HCT116 (cell line): ENCODE measurements at regions of chr5 and their contacts with region 1.

Region 1: DNA sequence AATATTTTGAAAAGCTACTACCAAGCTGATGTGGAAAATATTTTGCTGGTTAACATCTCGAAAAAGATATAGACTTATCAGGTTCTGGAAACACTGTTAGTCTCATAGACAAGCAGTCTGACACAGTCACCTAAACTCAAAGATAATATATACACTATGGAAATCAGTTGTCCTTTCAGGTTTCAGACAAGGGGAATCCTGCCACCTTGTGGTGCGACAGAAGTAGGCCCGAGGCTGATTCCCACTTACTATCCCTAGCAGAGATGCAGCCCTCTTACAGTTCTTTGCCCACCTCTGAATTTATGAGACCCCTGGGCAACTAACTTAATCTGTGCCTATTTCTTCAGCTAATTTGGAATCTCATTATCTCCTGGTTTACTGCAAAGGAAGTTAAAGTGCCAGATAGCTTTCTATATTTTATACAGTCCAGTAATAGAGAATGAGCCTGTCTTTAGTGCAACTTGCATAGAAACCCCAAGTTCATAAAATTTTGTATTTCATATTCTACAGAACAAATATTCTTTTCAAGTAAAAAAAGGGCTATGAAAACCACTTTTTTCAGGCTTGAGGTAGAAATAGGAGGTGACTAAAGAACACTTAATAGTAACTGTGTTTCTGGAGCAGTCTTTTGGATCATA is 16.9 kb downstream of the RAD1 start:
- DNase-seq: peak; percentile 44
- ATAC-seq: peak; percentile 87
- H3K4me3 ChIP-seq: no peak overlapping the region
- H3K27ac ChIP-seq: no peak overlapping the region
- H3K4me1 ChIP-seq: no peaks in the 10 kb centered on the region
- H3K27me3 ChIP-seq: no peaks in the 10 kb centered on the region
- CTCF ChIP-seq: peak; percentile 76 to 90 (median 88); a peak in 5 of 6 replicates
- POLR2A ChIP-seq: no peak
- RAD21 ChIP-seq: peak; percentile 89

Region 2: GRCh38 chr5:34486160-34486848 is 412.1 kb before region 1 on chr5:
- CTCF ChIA-PET with region 1: interaction called, 16 read pairs
- POLR2A ChIA-PET with region 1: no interaction called
- RAD21 ChIA-PET with region 1: interaction called, 4 to 5 read pairs
- intact Hi-C with region 1: loop called (anchors 1 kb)
- DNase-seq: peak; percentile 69
- ATAC-seq: peak; percentile 88
- H3K4me3 ChIP-seq: no peak overlapping the region
- H3K27ac ChIP-seq: no peak overlapping the region
- H3K4me1 ChIP-seq: no peaks in the 10 kb centered on the region
- H3K27me3 ChIP-seq: 0 out of 2 replicates have a peak, but pooled peaks cover 6% of the 10 kb centered on the region
- CTCF ChIP-seq: peak; percentile 75 to 86 (median 78); a peak in 5 of 6 replicates
- POLR2A ChIP-seq: no peak
- RAD21 ChIP-seq: peak; percentile 89

Region 3: DNA sequence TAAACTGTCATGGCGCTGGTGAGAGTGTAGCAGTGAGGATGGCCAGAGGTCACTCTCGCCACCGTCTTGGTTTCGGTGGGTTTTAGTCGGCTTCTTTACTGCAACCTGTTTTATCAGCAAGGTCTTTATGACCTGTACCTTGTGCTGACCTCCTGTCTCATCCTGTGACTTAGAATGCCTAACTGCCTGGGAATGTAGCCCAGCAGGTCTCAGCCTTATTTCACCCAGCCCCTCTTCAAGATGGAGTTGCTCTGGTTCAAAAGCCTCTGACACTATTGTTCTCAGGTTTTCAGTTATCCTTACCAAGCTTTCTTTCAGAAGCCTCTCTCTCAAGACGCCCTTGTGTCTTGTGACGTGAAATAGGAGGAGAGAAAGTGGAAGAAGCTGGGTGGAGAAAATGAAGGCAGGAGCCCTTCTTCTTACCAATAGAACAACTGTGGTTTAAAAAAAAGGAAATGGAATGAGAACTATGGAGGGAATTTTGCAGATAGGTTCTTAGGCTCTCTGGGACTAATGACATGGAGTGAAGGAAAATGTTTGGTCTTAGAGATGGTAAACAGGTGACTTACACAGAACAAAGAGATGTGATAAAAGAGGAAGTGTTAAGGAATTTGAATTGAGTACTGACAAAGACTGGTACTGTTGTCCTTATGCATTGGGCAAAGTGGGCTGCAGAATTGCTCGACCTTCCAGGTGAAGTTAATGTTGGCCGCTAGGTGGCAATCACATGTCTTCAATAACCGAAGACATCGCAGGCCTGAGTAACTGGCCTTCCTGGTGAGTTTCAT is 375.6 kb before region 1 on chr5:
- CTCF ChIA-PET with region 1: interaction called, 8 read pairs
- POLR2A ChIA-PET with region 1: interaction called, 4 read pairs
- RAD21 ChIA-PET with region 1: no interaction called
- intact Hi-C with region 1: loop called (anchors 1 kb)
- DNase-seq: peak; percentile 71
- ATAC-seq: peak; percentile 97
- H3K4me3 ChIP-seq: no peak overlapping the region
- H3K27ac ChIP-seq: no peak overlapping the region
- H3K4me1 ChIP-seq: no peaks in the 10 kb centered on the region
- H3K27me3 ChIP-seq: no peaks in the 10 kb centered on the region
- CTCF ChIP-seq: peak; percentile 65 to 80 (median 68); a peak in 5 of 6 replicates
- POLR2A ChIP-seq: no peak
- RAD21 ChIP-seq: peak; percentile 87

Region 4: GRCh38 chr5:34656001-34656699 is 242.2 kb before region 1 on chr5 and contains the start of gene RAI14:
- CTCF ChIA-PET with region 1: no interaction called
- POLR2A ChIA-PET with region 1: no interaction called
- RAD21 ChIA-PET with region 1: no interaction called
- intact Hi-C with region 1: loop called (anchors 10 kb)
- DNase-seq: peak; percentile 23
- ATAC-seq: peak; percentile 90
- H3K4me3 ChIP-seq: peak within 1 kb of the TSS; percentile 74 to 89
- H3K27ac ChIP-seq: peak within 1 kb of the TSS; percentile 78
- H3K4me1 ChIP-seq: peaks cover 13 to 24% of the 10 kb centered on the region in 2 experiments
- H3K27me3 ChIP-seq: no peaks in the 10 kb centered on the region; the same call in 1 of the 2 replicates
- CTCF ChIP-seq: no peak
- POLR2A ChIP-seq: no peak
- RAD21 ChIP-seq: no peak
- total RNA-seq, gene RAI14: 47.9 TPM

Region 5: GRCh38 chr5:34929150-34929719 is 30.9 kb after region 1 on chr5 and contains the start of gene DNAJC21:
- CTCF ChIA-PET with region 1: no interaction called
- POLR2A ChIA-PET with region 1: no interaction called
- RAD21 ChIA-PET with region 1: no interaction called
- intact Hi-C with region 1: no loop called
- DNase-seq: peak; percentile 87
- ATAC-seq: peak; percentile 89
- H3K4me3 ChIP-seq: peak within 1 kb of the TSS; percentile 90 to 93
- H3K27ac ChIP-seq: peak within 1 kb of the TSS; percentile 88
- H3K4me1 ChIP-seq: peaks cover 22 to 30% of the 10 kb centered on the region in 2 experiments
- H3K27me3 ChIP-seq: no peaks in the 10 kb centered on the region
- CTCF ChIP-seq: no peak
- POLR2A ChIP-seq: no peak
- RAD21 ChIP-seq: no peak
- total RNA-seq, gene DNAJC21: 34.7 TPM

Region 6: GRCh38 chr5:35838370-35839042 is 940.1 kb after region 1 on chr5:
- CTCF ChIA-PET with region 1: no interaction called
- POLR2A ChIA-PET with region 1: no interaction called
- RAD21 ChIA-PET with region 1: no interaction called
- intact Hi-C with region 1: no loop called
- DNase-seq: no peak
- ATAC-seq: no peak
- H3K4me3 ChIP-seq: no peak overlapping the region
- H3K27ac ChIP-seq: no peak overlapping the region
- H3K4me1 ChIP-seq: no peaks in the 10 kb centered on the region
- H3K27me3 ChIP-seq: peaks cover 16% of the 10 kb centered on the region
- CTCF ChIP-seq: no peak
- POLR2A ChIP-seq: no peak
- RAD21 ChIP-seq: no peak